Aorta (tissue), 5 donors: ENCODE measurements at regions of chr2 and their contacts with region 1.

Region 1: GRCh38 chr2:11863513-11864328 is 117.3 kb downstream of the LPIN1 start:
- DNase-seq: peak; percentile 92 to 94
- ATAC-seq: peak; percentile 94
- H3K4me3 ChIP-seq: no peak overlapping the region
- H3K27ac ChIP-seq: no peak overlapping the region
- H3K4me1 ChIP-seq: no peaks in the 10 kb centered on the region
- H3K27me3 ChIP-seq: no peaks in the 10 kb centered on the region

Region 2: DNA sequence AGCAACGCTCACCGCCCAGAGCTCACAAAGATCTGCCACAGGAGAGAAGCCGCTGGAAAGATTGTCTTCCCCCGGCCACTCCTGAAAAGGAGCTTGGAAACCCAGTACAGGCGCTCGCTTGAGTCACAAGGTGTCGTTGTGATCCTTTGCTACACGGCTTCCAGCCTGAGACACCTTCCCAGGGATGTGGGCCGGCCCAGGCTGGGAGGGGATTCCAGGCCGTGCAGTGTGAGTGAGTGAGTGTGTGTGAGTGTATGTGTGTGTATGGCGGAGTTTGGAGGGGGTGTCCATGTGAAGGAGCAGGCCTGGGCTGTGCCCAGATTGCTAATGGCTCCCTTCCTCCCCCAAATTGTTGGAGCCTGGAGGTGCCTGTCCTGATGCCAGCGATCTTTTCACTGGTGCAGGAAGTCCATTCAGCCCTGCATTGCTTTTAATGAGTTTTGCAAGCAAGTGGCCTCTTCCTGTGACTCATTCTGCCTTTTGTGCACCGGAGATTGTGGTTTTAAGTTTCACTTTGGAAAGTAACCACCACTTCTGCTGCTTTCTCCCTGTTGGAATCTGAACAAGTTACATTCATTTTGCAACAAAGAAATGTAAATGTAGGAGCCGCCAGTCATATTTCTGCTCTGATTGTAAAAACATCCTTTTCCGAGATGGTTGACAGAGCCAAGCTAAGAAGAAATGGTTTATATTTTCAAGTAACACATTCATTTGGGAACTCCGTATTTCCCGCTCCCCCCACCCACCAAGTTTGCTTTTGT is 33.6 kb before region 1 on chr2:
- intact Hi-C with region 1: loop called in 1 of 2 experiments (anchors 1 kb)
- DNase-seq: peak; percentile 79 to 82
- ATAC-seq: peak; percentile 85
- H3K4me3 ChIP-seq: peak overlapping the region; percentile 25 to 65
- H3K27ac ChIP-seq: peak overlapping the region in 1 of 2 donors; percentile 91
- H3K4me1 ChIP-seq: no peaks in the 10 kb centered on the region
- H3K27me3 ChIP-seq: no peaks in the 10 kb centered on the region

Region 3: DNA sequence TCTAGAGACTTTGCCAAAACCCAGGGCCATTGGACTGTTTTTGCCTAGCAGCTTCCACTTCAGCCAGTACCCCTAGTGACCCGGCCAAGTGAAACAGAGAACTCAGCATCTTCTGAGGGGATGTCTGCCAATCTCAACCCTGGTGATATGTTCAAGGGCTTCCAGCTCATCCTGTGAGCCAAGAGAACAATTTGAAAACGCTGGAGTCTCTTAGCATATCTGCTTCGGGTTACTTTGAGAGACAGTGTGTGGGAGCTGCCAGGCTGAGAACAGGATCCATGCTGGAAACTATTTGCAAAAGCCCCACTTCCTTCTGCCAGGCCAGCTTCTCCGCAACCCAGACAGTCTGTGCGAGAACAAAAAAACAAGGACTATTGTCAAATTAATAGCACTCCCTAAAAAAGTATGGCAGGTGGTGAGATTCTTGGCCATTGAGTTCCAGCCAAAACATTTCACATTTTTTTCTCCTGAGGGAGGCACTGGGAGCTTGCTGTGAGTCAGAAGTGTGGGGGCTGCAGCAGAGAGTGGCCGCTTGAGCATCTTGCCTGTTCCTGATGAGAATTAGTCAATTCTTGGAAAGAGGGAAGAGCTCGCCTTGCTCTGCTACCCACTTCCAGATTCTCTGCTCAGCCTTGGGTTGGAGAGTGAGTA is 457.4 kb after region 1 on chr2:
- intact Hi-C with region 1: loop called in 1 of 2 experiments (anchors 10 kb)
- DNase-seq: peak; percentile 82 to 83
- ATAC-seq: peak; percentile 81
- H3K4me3 ChIP-seq: no peak overlapping the region
- H3K27ac ChIP-seq: peak overlapping the region in 1 of 2 donors; percentile 97
- H3K4me1 ChIP-seq: peaks cover 0 to 9% of the 10 kb centered on the region in 2 donors
- H3K27me3 ChIP-seq: no peaks in the 10 kb centered on the region

Region 4: DNA sequence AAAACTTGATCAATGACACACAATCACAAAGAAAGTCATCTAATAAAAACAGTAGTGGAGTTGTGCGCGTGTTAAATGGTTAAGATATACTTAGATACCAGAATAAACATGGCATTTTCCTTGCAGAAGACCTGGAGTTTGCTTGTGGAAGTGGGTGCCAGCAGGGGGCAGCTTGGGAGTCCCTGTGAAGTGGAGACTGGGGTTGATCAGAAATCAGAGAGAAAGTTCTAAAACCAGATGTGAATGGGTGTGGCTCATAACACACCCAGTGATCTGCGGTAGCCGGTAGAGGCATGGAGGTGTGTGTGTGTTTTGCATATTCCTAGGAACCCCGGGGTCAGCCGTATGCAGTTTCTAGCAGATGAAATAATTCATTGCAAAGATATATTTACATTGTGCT is 552.9 kb after region 1 on chr2:
- intact Hi-C with region 1: loop called in 1 of 2 experiments (anchors 10 kb)
- DNase-seq: peak; percentile 68 to 87
- ATAC-seq: peak; percentile 54
- H3K4me3 ChIP-seq: no peak overlapping the region
- H3K27ac ChIP-seq: no peak overlapping the region
- H3K4me1 ChIP-seq: peaks cover 0 to 3% of the 10 kb centered on the region in 2 donors
- H3K27me3 ChIP-seq: no peaks in the 10 kb centered on the region

Region 5: GRCh38 chr2:12555012-12555645 is 691.4 kb after region 1 on chr2:
- intact Hi-C with region 1: loop called in 1 of 2 experiments (anchors 10 kb)
- DNase-seq: no peak
- ATAC-seq: peak; percentile 76
- H3K4me3 ChIP-seq: no peak overlapping the region
- H3K27ac ChIP-seq: no peak overlapping the region
- H3K4me1 ChIP-seq: peaks cover 7 to 10% of the 10 kb centered on the region in 2 donors
- H3K27me3 ChIP-seq: no peaks in the 10 kb centered on the region

Region 6: GRCh38 chr2:12931186-12931844 is 1067.6 kb after region 1 on chr2:
- intact Hi-C with region 1: loop called in 1 of 2 experiments (anchors 10 kb)
- DNase-seq: no peak
- ATAC-seq: peak; percentile 83
- H3K4me3 ChIP-seq: no peak overlapping the region
- H3K27ac ChIP-seq: no peak overlapping the region
- H3K4me1 ChIP-seq: no peaks in the 10 kb centered on the region
- H3K27me3 ChIP-seq: no peaks in the 10 kb centered on the region

Region 7: GRCh38 chr2:13006829-13007717 is 1143.4 kb after region 1 on chr2:
- intact Hi-C with region 1: loop called (anchors 2 to 5 kb)
- DNase-seq: peak; percentile 55 to 77
- ATAC-seq: peak; percentile 87
- H3K4me3 ChIP-seq: no peak overlapping the region
- H3K27ac ChIP-seq: no peak overlapping the region
- H3K4me1 ChIP-seq: no peaks in the 10 kb centered on the region
- H3K27me3 ChIP-seq: no peaks in the 10 kb centered on the region